ENCODE measurements at regions of chr7 and their contacts with region 1.

Region 1: GRCh38 chr7:50206453-50207250 is 97.9 kb upstream of the IKZF1 start:
- DNase-seq: peak; percentile 86
- ATAC-seq: peak; percentile 67
- H3K4me3 Mint-ChIP-seq: peak overlapping the region; percentile 52
- H3K27ac Mint-ChIP-seq: peak overlapping the region; percentile 89
- H3K4me1 Mint-ChIP-seq: peaks cover 97% of the 10 kb centered on the region
- H3K27me3 Mint-ChIP-seq: no peaks in the 10 kb centered on the region

Region 2: DNA sequence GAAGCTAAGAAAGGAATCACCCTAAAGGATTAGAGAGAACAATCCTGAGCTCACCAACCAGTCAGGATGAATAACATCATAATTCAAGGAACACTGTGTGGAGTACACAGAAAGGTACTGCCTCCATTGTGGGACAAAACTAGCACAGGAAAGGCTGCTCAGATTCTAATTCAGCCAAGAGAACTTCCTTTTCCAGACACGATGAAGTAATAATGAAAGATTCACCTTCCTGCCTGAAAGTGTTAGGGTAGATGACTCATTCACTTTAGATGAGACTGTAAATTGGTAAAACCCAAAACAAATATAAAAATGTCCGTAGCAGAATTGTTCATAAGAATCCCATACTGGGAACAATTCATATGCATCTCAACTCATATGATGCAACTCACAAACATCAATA is 1115.1 kb before region 1 on chr7:
- CTCF ChIA-PET with region 1: no interaction called
- POLR2A ChIA-PET with region 1: no interaction called
- intact Hi-C with region 1: no loop called
- DNase-seq: no peak
- ATAC-seq: no peak
- H3K4me3 Mint-ChIP-seq: no peak overlapping the region
- H3K27ac Mint-ChIP-seq: no peak overlapping the region
- H3K4me1 Mint-ChIP-seq: no peaks in the 10 kb centered on the region
- H3K27me3 Mint-ChIP-seq: no peaks in the 10 kb centered on the region

Region 3: GRCh38 chr7:50142425-50143017 is 64.1 kb before region 1 on chr7:
- CTCF ChIA-PET with region 1: interaction called, 43 read pairs
- POLR2A ChIA-PET with region 1: no interaction called
- intact Hi-C with region 1: loop called in 1 of 2 experiments (anchors 1 kb)
- DNase-seq: peak; percentile 51
- ATAC-seq: peak; percentile 63
- H3K4me3 Mint-ChIP-seq: peak overlapping the region; percentile 53
- H3K27ac Mint-ChIP-seq: peak overlapping the region; percentile 94
- H3K4me1 Mint-ChIP-seq: peaks cover 43% of the 10 kb centered on the region
- H3K27me3 Mint-ChIP-seq: no peaks in the 10 kb centered on the region

Region 4: GRCh38 chr7:50229964-50230363 is 23.3 kb after region 1 on chr7:
- CTCF ChIA-PET with region 1: interaction called, 12 read pairs
- POLR2A ChIA-PET with region 1: no interaction called
- intact Hi-C with region 1: loop called in 1 of 2 experiments (anchors 2 kb)
- DNase-seq: no peak
- ATAC-seq: no peak
- H3K4me3 Mint-ChIP-seq: no peak overlapping the region
- H3K27ac Mint-ChIP-seq: no peak overlapping the region
- H3K4me1 Mint-ChIP-seq: peaks cover 37% of the 10 kb centered on the region
- H3K27me3 Mint-ChIP-seq: no peaks in the 10 kb centered on the region

Region 5: DNA sequence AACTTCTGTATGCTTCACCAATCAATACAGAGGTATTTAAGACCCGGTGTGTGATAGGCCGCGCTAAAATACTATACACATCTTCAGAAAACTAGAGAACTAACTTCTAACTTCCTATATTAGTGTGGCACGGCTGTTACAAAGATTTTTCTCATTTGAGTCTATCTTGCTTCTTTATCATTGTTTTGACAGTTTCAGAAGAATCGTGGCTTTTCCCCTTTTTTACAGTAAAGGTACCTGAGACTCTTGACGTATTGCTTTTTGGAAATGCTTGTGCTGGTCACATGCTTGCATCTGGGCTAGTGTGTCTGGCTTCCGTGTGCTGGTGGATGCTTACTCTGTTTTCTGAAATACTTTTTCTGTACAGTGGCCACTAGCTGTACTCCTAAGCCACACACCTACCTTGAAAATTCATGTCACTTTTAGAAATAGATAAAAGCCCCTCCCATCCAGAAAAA is 110.6 kb after region 1 on chr7:
- CTCF ChIA-PET with region 1: interaction called, 126 read pairs
- POLR2A ChIA-PET with region 1: interaction called, 7 read pairs
- intact Hi-C with region 1: loop called (anchors 1 kb)
- DNase-seq: peak; percentile 73
- ATAC-seq: peak; percentile 82
- H3K4me3 Mint-ChIP-seq: peak overlapping the region; percentile 95
- H3K27ac Mint-ChIP-seq: peak overlapping the region; percentile 100
- H3K4me1 Mint-ChIP-seq: peaks cover 93% of the 10 kb centered on the region
- H3K27me3 Mint-ChIP-seq: no peaks in the 10 kb centered on the region

Region 6: GRCh38 chr7:50349963-50350944 is 143.6 kb after region 1 on chr7:
- CTCF ChIA-PET with region 1: interaction called, 10 read pairs
- POLR2A ChIA-PET with region 1: interaction called, 7 read pairs
- intact Hi-C with region 1: loop called (anchors 1 to 5 kb)
- DNase-seq: peak; percentile 93
- ATAC-seq: peak; percentile 71
- H3K4me3 Mint-ChIP-seq: peak overlapping the region; percentile 61
- H3K27ac Mint-ChIP-seq: peak overlapping the region; percentile 100
- H3K4me1 Mint-ChIP-seq: peaks cover 97% of the 10 kb centered on the region
- H3K27me3 Mint-ChIP-seq: no peaks in the 10 kb centered on the region

Region 7: GRCh38 chr7:50369143-50370026 is 162.7 kb after region 1 on chr7:
- CTCF ChIA-PET with region 1: interaction called, 93 read pairs
- POLR2A ChIA-PET with region 1: interaction called, 7 read pairs
- intact Hi-C with region 1: loop called (anchors 1 kb)
- DNase-seq: peak; percentile 62
- ATAC-seq: no peak
- H3K4me3 Mint-ChIP-seq: peak overlapping the region; percentile 10
- H3K27ac Mint-ChIP-seq: peak overlapping the region; percentile 88
- H3K4me1 Mint-ChIP-seq: peaks cover 96% of the 10 kb centered on the region
- H3K27me3 Mint-ChIP-seq: no peaks in the 10 kb centered on the region

Region 8: DNA sequence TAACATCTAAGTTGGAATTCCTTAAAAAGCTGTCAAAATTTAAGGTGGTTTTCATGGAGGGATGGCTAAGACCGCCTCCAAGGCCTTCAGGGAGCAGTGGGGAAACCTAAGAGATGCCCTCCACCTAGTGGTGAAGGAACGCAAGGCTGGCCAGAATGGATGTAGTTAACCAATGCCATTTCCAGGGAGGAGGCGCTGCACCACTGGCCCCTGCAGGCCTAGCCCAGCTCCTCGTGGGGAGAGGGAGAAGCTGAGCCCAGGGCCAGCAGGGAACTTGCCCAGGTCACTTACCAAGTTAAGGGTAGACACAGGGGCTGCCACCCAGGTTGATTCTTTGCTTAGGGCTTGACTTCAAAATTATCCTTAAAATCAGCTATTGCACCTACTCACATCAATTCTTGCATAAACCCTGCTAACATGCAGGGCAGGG is 211.4 kb after region 1 on chr7:
- CTCF ChIA-PET with region 1: interaction called, 41 read pairs
- POLR2A ChIA-PET with region 1: no interaction called
- intact Hi-C with region 1: loop called (anchors 1 kb)
- DNase-seq: peak; percentile 89
- ATAC-seq: peak; percentile 96
- H3K4me3 Mint-ChIP-seq: no peak overlapping the region
- H3K27ac Mint-ChIP-seq: no peak overlapping the region
- H3K4me1 Mint-ChIP-seq: peaks cover 24% of the 10 kb centered on the region
- H3K27me3 Mint-ChIP-seq: no peaks in the 10 kb centered on the region

Region 9: GRCh38 chr7:50610521-50611277 is 404.0 kb after region 1 on chr7:
- CTCF ChIA-PET with region 1: no interaction called
- POLR2A ChIA-PET with region 1: no interaction called
- intact Hi-C with region 1: no loop called
- DNase-seq: peak; percentile 69
- ATAC-seq: peak; percentile 80
- H3K4me3 Mint-ChIP-seq: no peak overlapping the region
- H3K27ac Mint-ChIP-seq: no peak overlapping the region
- H3K4me1 Mint-ChIP-seq: peaks cover 29% of the 10 kb centered on the region
- H3K27me3 Mint-ChIP-seq: peaks cover 3% of the 10 kb centered on the region

Measured in activated CD4-positive, alpha-beta T cell treated with anti-CD3 and anti-CD28 coated beads for 36 hours (primary cell).